ENCODE measurements at regions of chr4 and their contacts with region 1.

Region 1: GRCh38 chr4:149630079-149630478 is 185.6 kb downstream of the IQCM start:
- DNase-seq: no peak
- ATAC-seq: no peak
- H3K4me3 ChIP-seq: no peak overlapping the region
- H3K4me3 Mint-ChIP-seq: no peak overlapping the region
- H3K27ac ChIP-seq: no peak overlapping the region
- H3K27ac Mint-ChIP-seq: no peak overlapping the region
- H3K4me1 ChIP-seq: no peaks in the 10 kb centered on the region
- H3K4me1 Mint-ChIP-seq: no peaks in the 10 kb centered on the region
- H3K27me3 ChIP-seq: no peaks in the 10 kb centered on the region
- H3K27me3 Mint-ChIP-seq: no peaks in the 10 kb centered on the region

Region 2: GRCh38 chr4:147984065-147984777 is 1645.9 kb before region 1 on chr4:
- CTCF ChIA-PET with region 1: interaction called in 1 of 2 experiments, 12 read pairs
- POLR2A ChIA-PET with region 1: no interaction called
- DNase-seq: peak in 10 of 35 experiments; percentile 2 to 44 (median 6)
- ATAC-seq: no peak
- H3K4me3 ChIP-seq: no peak overlapping the region
- H3K4me3 Mint-ChIP-seq: no peak overlapping the region
- H3K27ac ChIP-seq: no peak overlapping the region
- H3K27ac Mint-ChIP-seq: no peak overlapping the region
- H3K4me1 ChIP-seq: no peaks in the 10 kb centered on the region
- H3K4me1 Mint-ChIP-seq: peaks cover 15 to 26% (median 24%) of the 10 kb centered on the region in 3 donors
- H3K27me3 ChIP-seq: no peaks in the 10 kb centered on the region
- H3K27me3 Mint-ChIP-seq: no peaks in the 10 kb centered on the region

Region 3: DNA sequence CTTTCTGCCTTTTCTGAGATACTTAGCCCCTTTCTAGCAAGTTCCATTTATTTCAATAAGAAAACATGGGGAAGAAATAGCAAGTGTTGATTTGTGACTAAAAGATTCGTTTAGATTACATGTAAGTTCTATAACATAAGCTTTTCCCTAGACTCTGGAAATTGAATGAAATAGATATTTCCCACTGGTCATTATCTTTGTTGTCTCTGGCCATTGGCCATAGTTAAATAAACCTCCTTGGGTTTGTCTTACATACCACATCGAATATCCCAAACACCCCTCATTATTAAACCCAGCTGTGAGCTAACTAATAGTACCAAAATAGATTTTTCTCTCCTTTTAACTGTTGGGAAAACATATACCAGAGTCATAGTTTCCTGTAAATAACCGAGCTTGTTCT is 349.3 kb before region 1 on chr4:
- CTCF ChIA-PET with region 1: no interaction called
- POLR2A ChIA-PET with region 1: no interaction called
- DNase-seq: no peak
- ATAC-seq: no peak
- H3K4me3 ChIP-seq: no peak overlapping the region
- H3K4me3 Mint-ChIP-seq: no peak overlapping the region
- H3K27ac ChIP-seq: no peak overlapping the region
- H3K27ac Mint-ChIP-seq: no peak overlapping the region
- H3K4me1 ChIP-seq: no peaks in the 10 kb centered on the region
- H3K4me1 Mint-ChIP-seq: no peaks in the 10 kb centered on the region
- H3K27me3 ChIP-seq: no peaks in the 10 kb centered on the region
- H3K27me3 Mint-ChIP-seq: no peaks in the 10 kb centered on the region